ENCODE measurements at regions of chr10 and their contacts with region 1.

Region 1: DNA sequence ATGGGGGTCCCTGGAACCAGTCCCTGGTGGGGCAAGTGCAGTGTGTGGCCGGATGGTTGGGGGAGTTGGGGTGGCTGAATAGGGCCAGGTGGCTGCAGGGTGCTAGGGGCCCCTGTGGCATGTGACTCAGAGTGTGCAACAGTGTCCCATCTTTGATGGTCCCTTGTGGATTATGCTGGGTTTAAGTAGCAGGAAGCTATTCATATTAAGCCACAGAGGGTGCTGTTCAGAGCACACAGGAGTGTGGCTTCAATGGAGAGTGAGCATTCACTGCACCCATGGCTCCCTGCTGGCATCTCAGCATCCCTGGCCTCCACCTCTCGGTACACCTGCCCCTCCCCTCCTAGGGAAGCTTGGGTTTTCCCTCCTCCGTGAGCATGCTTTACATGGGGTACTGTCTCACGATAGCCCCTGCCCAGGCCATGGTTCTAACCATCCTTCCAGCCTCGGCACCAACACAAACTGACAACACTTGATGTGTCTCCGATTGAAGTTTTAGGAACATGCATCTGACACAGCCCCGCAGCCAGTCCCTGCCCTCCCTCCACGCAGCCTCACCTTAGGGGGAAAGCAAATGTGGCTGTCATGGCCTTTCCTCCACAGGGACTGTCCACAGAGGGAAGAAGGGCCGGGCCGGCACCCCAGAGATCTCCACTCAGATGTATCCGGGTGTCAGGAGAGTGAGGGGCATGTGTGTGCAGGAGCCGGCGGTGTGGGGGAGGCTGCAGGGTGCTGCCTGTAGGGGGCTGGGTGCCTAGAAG is 30.4 kb upstream of the PPIF start:
- DNase-seq: peak in 2 of 5 donors; percentile 8 to 26
- H3K4me3 ChIP-seq: peak overlapping the region in 1 of 2 donors; percentile 27
- H3K4me3 Mint-ChIP-seq: peak overlapping the region; percentile 73 to 87 (median 82)
- H3K27ac ChIP-seq: no peak overlapping the region
- H3K27ac Mint-ChIP-seq: peak overlapping the region in 6 of 7 donors; percentile 61 to 97 (median 94)
- H3K4me1 ChIP-seq: peaks cover 67% of the 10 kb centered on the region
- H3K4me1 Mint-ChIP-seq: peaks cover 55 to 69% (median 60%) of the 10 kb centered on the region in 4 donors
- H3K27me3 ChIP-seq: no peaks in the 10 kb centered on the region
- H3K27me3 Mint-ChIP-seq: peaks cover 1 to 4% of the 10 kb centered on the region in 2 donors

Region 2: DNA sequence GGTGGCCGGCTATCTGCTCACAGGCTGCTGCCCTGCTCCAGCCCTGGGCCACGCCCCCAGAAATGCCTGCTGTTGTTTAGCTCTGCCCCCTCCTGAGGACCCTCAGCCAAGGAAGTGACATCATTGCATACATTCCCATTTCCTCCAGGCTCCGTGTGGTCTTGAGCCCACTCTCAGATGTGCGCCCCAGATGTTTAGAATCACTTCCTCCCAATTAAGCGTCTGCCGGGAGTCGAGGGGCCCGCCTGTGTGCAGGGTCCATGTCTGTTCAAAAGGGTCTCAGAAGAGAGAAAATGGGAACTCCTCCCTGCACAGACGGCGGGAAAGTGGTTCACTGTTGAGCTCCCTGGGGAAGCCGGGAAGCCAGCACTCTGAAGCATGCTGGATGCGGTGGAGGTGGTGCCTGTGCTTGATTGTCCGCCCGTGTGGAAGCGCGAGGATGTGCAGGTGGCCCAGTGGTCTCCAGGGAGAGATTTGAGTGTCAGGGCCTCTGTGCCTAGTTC is 86.5 kb before region 1 on chr10:
- CTCF ChIA-PET with region 1: no interaction called
- POLR2A ChIA-PET with region 1: no interaction called
- intact Hi-C with region 1: no loop called
- DNase-seq: no peak
- H3K4me3 ChIP-seq: no peak overlapping the region
- H3K4me3 Mint-ChIP-seq: no peak overlapping the region
- H3K27ac ChIP-seq: no peak overlapping the region
- H3K27ac Mint-ChIP-seq: no peak overlapping the region
- H3K4me1 ChIP-seq: no peaks in the 10 kb centered on the region
- H3K4me1 Mint-ChIP-seq: peaks cover 0 to 13% (median 0%) of the 10 kb centered on the region in 4 donors
- H3K27me3 ChIP-seq: no peaks in the 10 kb centered on the region
- H3K27me3 Mint-ChIP-seq: no peaks in the 10 kb centered on the region

Region 3: GRCh38 chr10:79242620-79243152 is 74.2 kb before region 1 on chr10:
- CTCF ChIA-PET with region 1: no interaction called
- POLR2A ChIA-PET with region 1: no interaction called
- intact Hi-C with region 1: loop called (anchors 2 kb)
- DNase-seq: peak; percentile 31 to 70 (median 39)
- H3K4me3 ChIP-seq: peak overlapping the region in 1 of 2 donors; percentile 52
- H3K4me3 Mint-ChIP-seq: peak overlapping the region in 7 of 8 donors; percentile 31 to 81 (median 58)
- H3K27ac ChIP-seq: no peak overlapping the region
- H3K27ac Mint-ChIP-seq: peak overlapping the region in 1 of 7 donors; percentile 78
- H3K4me1 ChIP-seq: peaks cover 49% of the 10 kb centered on the region
- H3K4me1 Mint-ChIP-seq: peaks cover 30 to 53% (median 44%) of the 10 kb centered on the region in 4 donors
- H3K27me3 ChIP-seq: no peaks in the 10 kb centered on the region
- H3K27me3 Mint-ChIP-seq: no peaks in the 10 kb centered on the region

Region 4: GRCh38 chr10:79331709-79332108 is 14.9 kb after region 1 on chr10:
- CTCF ChIA-PET with region 1: interaction called, 12 read pairs
- POLR2A ChIA-PET with region 1: interaction called, 27 read pairs
- intact Hi-C with region 1: loop called (anchors 1 kb)
- DNase-seq: peak; percentile 54 to 93 (median 65)
- H3K4me3 ChIP-seq: no peak overlapping the region
- H3K4me3 Mint-ChIP-seq: peak overlapping the region in 6 of 8 donors; percentile 21 to 67 (median 42)
- H3K27ac ChIP-seq: peak overlapping the region; percentile 29
- H3K27ac Mint-ChIP-seq: peak overlapping the region; percentile 76 to 95 (median 89)
- H3K4me1 ChIP-seq: peaks cover 20% of the 10 kb centered on the region
- H3K4me1 Mint-ChIP-seq: peaks cover 18 to 31% (median 20%) of the 10 kb centered on the region in 4 donors
- H3K27me3 ChIP-seq: no peaks in the 10 kb centered on the region
- H3K27me3 Mint-ChIP-seq: no peaks in the 10 kb centered on the region